ENCODE measurements at regions of chr16 and their contacts with region 1.

Region 1: GRCh38 chr16:22374311-22375116 is at the start of gene CDR2:
- DNase-seq: peak; percentile 99
- ATAC-seq: peak; percentile 96
- H3K4me3 ChIP-seq: peak within 1 kb of the TSS; percentile 85 to 86
- H3K27ac ChIP-seq: peak within 1 kb of the TSS in 1 of 2 donors; percentile 30
- H3K4me1 ChIP-seq: peaks cover 0 to 4% of the 10 kb centered on the region in 2 donors
- H3K27me3 ChIP-seq: no peaks in the 10 kb centered on the region
- total RNA-seq, gene CDR2: 34.7 to 37.9 TPM

Region 2: GRCh38 chr16:22424161-22424937 is 49.8 kb after region 1 on chr16:
- intact Hi-C with region 1: loop called in 1 of 2 experiments (anchors 5 kb)
- DNase-seq: peak; percentile 89 to 90
- ATAC-seq: peak; percentile 85
- H3K4me3 ChIP-seq: no peak overlapping the region
- H3K27ac ChIP-seq: peak overlapping the region; percentile 16 to 78
- H3K4me1 ChIP-seq: no peaks in the 10 kb centered on the region
- H3K27me3 ChIP-seq: no peaks in the 10 kb centered on the region